WTC11 (cell line): ENCODE measurements at regions of chr3 and their contacts with region 1.

Region 1: GRCh38 chr3:186241910-186242821 is 119.9 kb downstream of the DGKG start:
- DNase-seq: peak; percentile 83
- ATAC-seq: peak; percentile 95
- H3K4me3 Mint-ChIP-seq: no peak overlapping the region
- H3K27ac Mint-ChIP-seq: no peak overlapping the region
- H3K4me1 Mint-ChIP-seq: peaks cover 25% of the 10 kb centered on the region
- H3K27me3 Mint-ChIP-seq: no peaks in the 10 kb centered on the region
- CTCF ChIP-seq: peak; percentile 25; the same call in 1 of the 2 replicates

Region 2: DNA sequence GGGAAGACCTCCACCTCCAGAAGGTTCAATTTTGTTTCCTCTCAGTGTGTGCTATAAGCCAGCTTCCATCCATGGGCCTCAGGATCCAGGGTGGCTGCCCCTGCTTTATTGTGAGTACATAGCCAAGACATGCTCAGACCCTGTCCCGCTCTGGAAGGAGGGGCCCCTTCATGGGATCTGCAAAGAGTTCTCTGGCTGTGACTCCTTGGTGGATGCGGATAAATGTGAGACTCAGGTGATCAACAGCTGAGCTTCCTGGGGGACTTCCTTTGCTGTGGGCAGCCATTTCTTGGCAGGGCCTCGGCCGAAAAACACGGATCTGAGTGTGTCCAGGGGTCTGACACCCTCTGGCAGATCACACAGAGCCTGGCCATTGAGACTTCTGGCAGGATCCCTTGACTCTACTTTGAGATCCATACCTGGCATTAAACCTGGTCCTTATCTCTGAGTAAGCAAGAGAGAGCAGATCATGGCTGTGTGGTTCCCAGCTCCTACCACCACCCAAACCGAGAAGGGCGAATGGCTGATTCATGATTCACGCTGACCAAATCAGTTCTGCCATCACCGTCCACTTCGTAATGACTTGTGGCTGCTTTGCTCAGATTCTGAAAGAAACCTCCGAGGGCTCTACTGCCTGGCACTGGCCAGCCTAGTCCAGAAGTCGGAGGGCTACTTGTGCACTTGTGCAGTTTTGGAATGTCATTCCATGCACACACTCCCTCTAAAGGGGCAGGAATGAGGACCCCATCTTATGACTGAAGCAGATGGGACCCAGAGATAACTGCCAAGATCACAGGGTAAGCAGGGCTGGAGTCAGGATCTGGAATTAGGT is 588.0 kb before region 1 on chr3:
- CTCF ChIA-PET with region 1: no interaction called
- POLR2A ChIA-PET with region 1: no interaction called
- DNase-seq: no peak
- ATAC-seq: no peak
- H3K4me3 Mint-ChIP-seq: no peak overlapping the region
- H3K27ac Mint-ChIP-seq: no peak overlapping the region; the same call in 1 of the 2 replicates
- H3K4me1 Mint-ChIP-seq: no peaks in the 10 kb centered on the region
- H3K27me3 Mint-ChIP-seq: no peaks in the 10 kb centered on the region; the same call in 1 of the 2 replicates
- CTCF ChIP-seq: no peak

Region 3: GRCh38 chr3:185983495-185984141 is 258.5 kb before region 1 on chr3:
- CTCF ChIA-PET with region 1: interaction called, 34 read pairs
- POLR2A ChIA-PET with region 1: no interaction called
- DNase-seq: peak; percentile 82
- ATAC-seq: peak; percentile 89
- H3K4me3 Mint-ChIP-seq: peak overlapping the region; percentile 55
- H3K27ac Mint-ChIP-seq: no peak overlapping the region
- H3K4me1 Mint-ChIP-seq: peaks cover 3% of the 10 kb centered on the region; the same call in 1 of the 2 replicates
- H3K27me3 Mint-ChIP-seq: peaks cover 10% of the 10 kb centered on the region; the same call in 1 of the 2 replicates
- CTCF ChIP-seq: peak; percentile 88

Region 4: GRCh38 chr3:186079925-186080324 is 162.2 kb before region 1 on chr3:
- CTCF ChIA-PET with region 1: interaction called, 15 read pairs
- POLR2A ChIA-PET with region 1: no interaction called
- DNase-seq: peak; percentile 22
- ATAC-seq: peak; percentile 85
- H3K4me3 Mint-ChIP-seq: peak overlapping the region; percentile 12
- H3K27ac Mint-ChIP-seq: peak overlapping the region; percentile 98
- H3K4me1 Mint-ChIP-seq: peaks cover 76% of the 10 kb centered on the region
- H3K27me3 Mint-ChIP-seq: no peaks in the 10 kb centered on the region
- CTCF ChIP-seq: no peak

Region 5: DNA sequence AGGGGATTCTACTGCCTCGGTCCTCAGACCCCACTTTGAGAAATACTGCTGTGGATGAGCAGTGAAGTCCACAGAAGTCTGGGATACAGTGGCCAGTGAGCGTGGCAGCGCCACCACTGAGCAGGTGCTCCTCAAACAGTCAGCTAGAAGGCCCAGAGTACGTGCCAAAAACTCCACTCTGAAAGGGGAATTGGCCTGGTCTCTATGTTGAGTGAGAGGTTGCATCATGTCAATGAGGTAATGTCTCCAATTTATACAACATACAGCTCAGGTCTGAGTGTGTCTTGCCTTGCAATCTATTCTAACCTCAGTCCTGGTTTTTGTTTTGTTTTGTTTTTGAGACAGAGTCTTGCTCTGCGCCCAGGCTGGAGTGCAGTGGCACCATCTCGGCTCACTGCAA is 79.9 kb before region 1 on chr3:
- CTCF ChIA-PET with region 1: no interaction called
- POLR2A ChIA-PET with region 1: no interaction called
- DNase-seq: no peak
- ATAC-seq: no peak
- H3K4me3 Mint-ChIP-seq: no peak overlapping the region
- H3K27ac Mint-ChIP-seq: no peak overlapping the region
- H3K4me1 Mint-ChIP-seq: no peaks in the 10 kb centered on the region
- H3K27me3 Mint-ChIP-seq: peaks cover 3% of the 10 kb centered on the region; the same call in 1 of the 2 replicates
- CTCF ChIP-seq: no peak

Region 6: DNA sequence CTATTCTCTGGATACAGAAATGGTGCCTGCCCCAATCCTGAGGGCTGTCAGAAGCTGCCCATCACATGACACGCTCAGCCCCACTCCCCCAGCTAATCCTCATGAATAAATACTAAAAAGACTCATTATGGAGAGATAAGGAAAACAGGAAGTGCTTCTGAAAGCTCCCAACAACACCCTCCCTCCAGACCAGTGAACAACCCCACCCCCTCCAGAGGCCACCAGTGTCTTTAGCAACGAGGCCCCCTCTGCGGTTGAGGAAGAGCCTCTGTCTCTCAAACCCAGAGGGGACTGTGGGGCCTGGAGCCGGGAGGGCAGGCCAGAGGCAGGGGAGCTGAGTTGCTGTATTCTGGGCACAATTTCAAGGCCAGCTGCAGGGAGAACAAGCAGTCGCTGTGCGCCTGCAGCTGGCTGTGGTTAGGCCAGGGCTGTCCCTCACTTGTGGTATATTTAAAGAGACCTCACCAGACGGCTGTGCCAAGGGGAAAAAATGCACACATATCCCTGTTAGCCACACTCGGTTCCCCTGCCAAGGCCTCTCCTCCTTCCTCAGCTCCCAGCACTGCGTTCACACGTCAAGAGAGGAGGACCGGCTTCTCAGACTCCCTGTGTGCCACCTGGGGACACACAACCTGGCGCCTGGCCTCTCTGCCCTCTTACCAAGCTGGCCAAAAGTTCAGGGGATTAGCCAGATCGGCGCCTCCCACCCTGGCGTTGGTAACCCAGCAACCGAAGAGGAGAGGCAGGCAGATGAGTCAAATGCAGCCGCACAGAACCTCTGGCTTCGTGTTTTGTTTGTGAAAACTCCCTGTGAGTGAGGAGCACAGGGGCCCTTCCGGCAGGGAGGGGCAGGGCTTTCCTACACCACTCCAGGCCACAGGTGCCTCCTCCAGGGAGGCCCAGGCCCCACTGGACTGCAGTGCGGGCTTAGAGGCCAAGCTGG is 32.1 kb before region 1 on chr3:
- CTCF ChIA-PET with region 1: interaction called, 33 read pairs
- POLR2A ChIA-PET with region 1: no interaction called
- DNase-seq: peak; percentile 26
- ATAC-seq: peak; percentile 83
- H3K4me3 Mint-ChIP-seq: no peak overlapping the region
- H3K27ac Mint-ChIP-seq: peak overlapping the region; percentile 67; the same call in 1 of the 2 replicates
- H3K4me1 Mint-ChIP-seq: peaks cover 49% of the 10 kb centered on the region
- H3K27me3 Mint-ChIP-seq: no peaks in the 10 kb centered on the region
- CTCF ChIP-seq: no peak

Region 7: GRCh38 chr3:186259612-186260383 is 17.6 kb after region 1 on chr3:
- CTCF ChIA-PET with region 1: interaction called, 31 read pairs
- POLR2A ChIA-PET with region 1: no interaction called
- DNase-seq: peak; percentile 91
- ATAC-seq: peak; percentile 98
- H3K4me3 Mint-ChIP-seq: peak overlapping the region; percentile 41; the same call in 1 of the 2 replicates
- H3K27ac Mint-ChIP-seq: peak overlapping the region; percentile 32; the same call in 1 of the 2 replicates
- H3K4me1 Mint-ChIP-seq: peaks cover 27% of the 10 kb centered on the region
- H3K27me3 Mint-ChIP-seq: no peaks in the 10 kb centered on the region; the same call in 1 of the 2 replicates
- CTCF ChIP-seq: no peak; the same call in 1 of the 2 replicates

Region 8: DNA sequence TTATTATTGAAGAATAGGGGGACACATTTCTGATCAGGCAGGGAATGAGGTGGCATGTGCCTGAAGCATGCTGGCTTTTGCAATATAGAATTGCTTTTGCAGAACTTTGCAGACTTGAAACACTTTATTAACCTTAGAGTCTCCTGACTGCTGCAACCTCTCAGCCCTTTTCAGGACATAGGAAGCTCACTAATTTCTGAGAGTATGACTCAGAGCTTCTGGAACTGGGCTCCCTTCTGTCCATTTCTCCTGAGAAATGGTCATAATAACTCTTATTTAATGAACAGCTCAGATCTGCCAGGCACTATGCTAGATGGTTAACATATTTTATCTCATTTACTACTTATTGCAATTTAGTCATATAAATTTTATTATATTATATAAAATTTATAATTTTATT is 158.5 kb after region 1 on chr3:
- CTCF ChIA-PET with region 1: no interaction called
- POLR2A ChIA-PET with region 1: no interaction called
- DNase-seq: no peak
- ATAC-seq: no peak
- H3K4me3 Mint-ChIP-seq: no peak overlapping the region
- H3K27ac Mint-ChIP-seq: no peak overlapping the region
- H3K4me1 Mint-ChIP-seq: no peaks in the 10 kb centered on the region
- H3K27me3 Mint-ChIP-seq: no peaks in the 10 kb centered on the region
- CTCF ChIP-seq: no peak

Region 9: DNA sequence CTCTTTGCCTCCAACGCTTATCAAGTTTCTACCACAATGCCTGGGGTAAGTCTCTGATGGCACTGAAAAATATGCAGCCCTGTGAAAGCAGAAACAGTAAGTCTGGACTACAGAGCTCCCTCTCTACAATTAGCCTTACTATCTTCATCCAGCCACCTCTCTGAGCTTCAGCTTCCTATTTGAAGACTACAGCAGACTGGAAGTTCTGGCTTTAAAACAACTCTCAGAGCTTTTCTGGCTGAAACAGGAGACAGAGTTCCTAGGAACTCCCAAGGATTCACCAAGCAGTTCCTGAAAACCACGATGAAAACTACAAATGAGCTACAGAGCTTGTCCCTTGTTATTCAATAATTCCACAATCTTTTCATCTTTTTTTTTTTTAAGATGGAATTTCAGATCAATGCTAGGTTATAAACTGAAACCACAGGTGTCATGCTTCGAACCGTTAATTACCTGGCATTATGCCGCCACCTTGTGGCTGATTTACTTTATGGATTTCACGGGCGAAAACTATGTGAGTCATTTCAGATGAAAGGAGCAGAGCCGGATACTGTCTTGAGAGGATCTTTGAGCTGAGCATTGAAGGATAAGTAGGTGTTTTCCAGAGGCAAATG is 298.2 kb after region 1 on chr3:
- CTCF ChIA-PET with region 1: interaction called, 26 read pairs
- POLR2A ChIA-PET with region 1: no interaction called
- DNase-seq: peak; percentile 75
- ATAC-seq: peak; percentile 86
- H3K4me3 Mint-ChIP-seq: no peak overlapping the region
- H3K27ac Mint-ChIP-seq: peak overlapping the region; percentile 22
- H3K4me1 Mint-ChIP-seq: peaks cover 6% of the 10 kb centered on the region
- H3K27me3 Mint-ChIP-seq: no peaks in the 10 kb centered on the region
- CTCF ChIP-seq: peak; percentile 40; the same call in 1 of the 2 replicates